ENCODE measurements at regions of chr4 and their contacts with region 1.

Region 1: GRCh38 chr4:111839141-111839540 is 306.1 kb upstream of the FAM241A start:
- DNase-seq: no peak
- H3K4me3 ChIP-seq: no peak overlapping the region
- H3K27ac ChIP-seq: no peak overlapping the region
- H3K4me1 ChIP-seq: no peaks in the 10 kb centered on the region
- H3K27me3 ChIP-seq: no peaks in the 10 kb centered on the region

Region 2: DNA sequence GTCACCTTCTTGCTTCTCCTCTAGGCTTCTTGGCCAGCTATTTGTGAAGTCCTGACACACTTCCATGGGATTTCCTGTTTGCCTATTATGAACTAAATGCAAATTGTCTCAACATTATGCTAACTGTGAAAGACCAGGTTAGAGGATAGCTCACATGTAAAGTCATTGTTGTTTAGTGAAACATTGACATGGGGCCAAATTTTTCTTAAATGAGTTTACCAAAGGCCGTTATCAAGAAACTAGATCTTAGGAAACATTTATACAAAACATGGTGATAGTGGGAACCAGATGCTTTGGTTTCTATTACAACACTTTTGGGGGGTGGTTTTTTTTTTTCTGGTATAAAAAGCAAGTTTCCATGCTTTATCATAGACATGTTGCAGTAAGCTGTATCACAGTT is 160.7 kb before region 1 on chr4:
- CTCF ChIA-PET with region 1: no interaction called
- POLR2A ChIA-PET with region 1: no interaction called
- DNase-seq: no peak
- H3K4me3 ChIP-seq: no peak overlapping the region
- H3K27ac ChIP-seq: no peak overlapping the region
- H3K4me1 ChIP-seq: no peaks in the 10 kb centered on the region
- H3K27me3 ChIP-seq: peaks cover 0 to 2% (median 0%) of the 10 kb centered on the region in 5 experiments

Region 3: DNA sequence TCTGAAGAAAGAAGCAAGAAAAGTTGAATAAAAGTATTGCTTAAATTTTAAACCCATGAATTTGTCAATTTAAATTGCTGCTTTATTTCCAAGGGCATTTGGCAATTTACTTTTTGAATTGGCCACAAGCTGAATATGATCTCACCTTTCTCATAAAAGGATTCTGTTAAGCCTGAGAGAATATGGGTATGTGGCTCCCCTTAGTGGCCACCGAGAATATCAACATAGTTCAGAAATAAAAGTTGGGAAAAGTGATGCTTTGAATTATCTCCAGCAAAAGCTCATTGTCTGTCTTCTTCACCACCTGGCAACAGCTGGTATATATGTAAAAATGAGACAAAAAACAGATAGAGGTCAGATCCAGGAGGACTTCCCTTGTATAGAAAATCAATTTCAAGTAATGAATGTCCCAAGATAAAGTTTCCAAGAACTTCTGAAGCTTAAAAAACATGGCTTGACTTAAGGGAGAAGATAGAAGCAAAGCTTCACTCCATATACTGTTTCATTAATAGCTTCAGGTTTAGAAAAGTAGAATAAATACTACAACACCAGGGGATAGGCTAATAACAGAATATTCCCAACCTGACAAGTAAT is 15.4 kb after region 1 on chr4:
- CTCF ChIA-PET with region 1: interaction called, 11 read pairs
- POLR2A ChIA-PET with region 1: no interaction called
- DNase-seq: peak; percentile 4 to 50 (median 38)
- H3K4me3 ChIP-seq: no peak overlapping the region
- H3K27ac ChIP-seq: no peak overlapping the region
- H3K4me1 ChIP-seq: no peaks in the 10 kb centered on the region
- H3K27me3 ChIP-seq: no peaks in the 10 kb centered on the region

Measured in common myeloid progenitor, CD34-positive (primary cell).